GM10248 (cell line): ENCODE measurements at regions of chr5 and their contacts with region 1.

Region 1: DNA sequence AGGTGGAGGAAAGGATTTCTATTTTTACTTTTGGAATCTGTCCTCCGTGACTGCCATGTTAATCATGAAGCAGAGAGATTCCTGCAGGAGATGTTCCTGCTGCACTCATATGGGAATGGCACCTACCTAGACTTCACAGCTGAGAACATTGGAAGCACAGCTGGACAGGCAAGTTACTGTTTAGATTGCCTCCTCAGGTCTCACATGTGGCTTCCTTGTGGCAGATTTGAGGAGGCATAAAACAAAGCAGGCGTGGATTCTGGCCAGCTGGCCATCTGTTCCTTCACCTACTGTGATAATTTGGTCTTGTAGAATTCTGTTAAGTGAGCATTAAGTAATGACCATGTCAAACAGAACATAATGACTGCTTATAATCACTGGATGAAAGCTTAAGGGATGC is 193.4 kb downstream of the EDIL3 start:
- DNase-seq: no peak
- CTCF ChIP-seq: no peak

Region 2: DNA sequence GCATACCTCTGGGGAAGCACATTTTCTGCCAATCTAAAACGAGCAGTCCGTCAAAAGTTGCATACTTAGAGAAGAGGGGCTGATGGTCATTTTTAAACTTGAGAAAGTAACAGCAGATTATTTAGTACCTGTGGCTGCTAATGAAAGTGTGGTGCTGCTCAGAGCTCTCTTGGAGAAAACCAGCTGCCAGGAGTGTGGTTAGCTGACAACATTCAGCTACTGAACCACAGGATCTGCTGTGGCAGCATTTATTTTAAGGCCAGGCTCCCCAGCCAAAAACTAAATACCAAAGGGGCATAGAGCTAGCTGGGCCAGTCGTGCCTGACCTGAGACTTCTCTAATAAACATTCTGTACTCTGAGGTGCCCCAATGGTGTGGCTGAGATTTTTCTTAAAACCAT is 10.2 kb before region 1 on chr5:
- CTCF ChIA-PET with region 1: interaction called, 10 read pairs
- POLR2A ChIA-PET with region 1: no interaction called
- DNase-seq: no peak
- CTCF ChIP-seq: no peak

Region 3: DNA sequence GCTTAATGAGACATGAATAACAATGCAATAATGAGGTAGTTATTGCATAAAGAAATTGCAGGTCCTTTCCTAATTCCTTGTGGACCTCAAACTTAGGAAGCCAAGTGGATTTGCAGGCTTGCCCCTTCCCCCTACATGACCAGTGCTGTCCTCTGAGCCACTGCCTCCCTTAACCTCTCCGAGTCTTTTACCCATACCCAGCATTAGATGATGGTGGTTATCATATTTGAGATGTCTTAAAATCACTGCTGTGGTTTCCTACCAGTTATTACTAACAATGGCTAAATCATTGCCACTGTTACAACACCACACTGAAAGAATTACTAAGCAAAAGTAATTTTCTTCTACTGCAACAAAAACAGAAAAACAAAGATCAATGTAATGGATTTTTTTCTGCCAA is 22.6 kb after region 1 on chr5:
- CTCF ChIA-PET with region 1: no interaction called
- POLR2A ChIA-PET with region 1: no interaction called
- DNase-seq: no peak
- CTCF ChIP-seq: no peak